ENCODE measurements at regions of chr16 and their contacts with region 1.

Region 1: GRCh38 chr16:10226141-10226986 is 44.1 kb upstream of the GRIN2A start:
- DNase-seq: no peak
- ATAC-seq: no peak
- H3K4me3 ChIP-seq: no peak overlapping the region
- H3K27ac ChIP-seq: no peak overlapping the region
- H3K4me1 ChIP-seq: no peaks in the 10 kb centered on the region
- H3K27me3 ChIP-seq: no peaks in the 10 kb centered on the region
- CTCF ChIP-seq: no peak
- POLR2A ChIP-seq: no peak
- RAD21 ChIP-seq: no peak

Region 2: GRCh38 chr16:10200637-10201586 is 25.5 kb before region 1 on chr16:
- CTCF ChIA-PET with region 1: no interaction called
- POLR2A ChIA-PET with region 1: no interaction called
- dilution Hi-C with region 1: no loop called
- in situ Hi-C with region 1: no loop called
- intact Hi-C with region 1: no loop called
- DNase-seq: no peak
- ATAC-seq: no peak
- H3K4me3 ChIP-seq: no peak overlapping the region
- H3K27ac ChIP-seq: no peak overlapping the region
- H3K4me1 ChIP-seq: no peaks in the 10 kb centered on the region
- H3K27me3 ChIP-seq: no peaks in the 10 kb centered on the region
- CTCF ChIP-seq: no peak
- POLR2A ChIP-seq: no peak
- RAD21 ChIP-seq: no peak

Region 3: DNA sequence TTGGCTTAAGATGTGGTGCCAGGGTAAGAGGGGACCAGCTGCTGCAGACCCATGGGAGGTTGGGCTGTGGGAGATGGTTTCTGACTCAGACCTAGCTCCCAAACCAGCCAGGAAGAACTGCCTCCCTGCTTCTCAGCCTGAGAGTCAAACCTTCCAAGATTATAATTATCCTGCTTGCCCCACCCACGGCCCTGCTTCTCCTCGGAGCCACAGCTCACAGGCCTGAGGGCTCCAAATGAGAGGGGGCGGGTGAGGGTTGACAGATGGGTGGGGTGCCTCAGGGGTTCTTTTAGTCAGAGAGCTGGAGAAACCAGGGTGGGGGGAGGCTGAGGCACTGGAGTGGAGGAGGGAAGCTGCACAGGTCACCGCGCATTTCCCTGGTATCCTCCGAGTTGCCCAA is 15.4 kb before region 1 on chr16:
- CTCF ChIA-PET with region 1: no interaction called
- POLR2A ChIA-PET with region 1: interaction called, 10 read pairs
- dilution Hi-C with region 1: no loop called
- in situ Hi-C with region 1: no loop called
- intact Hi-C with region 1: no loop called
- DNase-seq: no peak
- ATAC-seq: no peak
- H3K4me3 ChIP-seq: no peak overlapping the region
- H3K27ac ChIP-seq: no peak overlapping the region
- H3K4me1 ChIP-seq: no peaks in the 10 kb centered on the region
- H3K27me3 ChIP-seq: no peaks in the 10 kb centered on the region
- CTCF ChIP-seq: no peak
- POLR2A ChIP-seq: no peak
- RAD21 ChIP-seq: no peak

Region 4: GRCh38 chr16:10625593-10626273 is 399.4 kb after region 1 on chr16:
- CTCF ChIA-PET with region 1: no interaction called
- POLR2A ChIA-PET with region 1: no interaction called
- dilution Hi-C with region 1: no loop called
- in situ Hi-C with region 1: no loop called
- intact Hi-C with region 1: no loop called
- DNase-seq: peak; percentile 31
- ATAC-seq: peak; percentile 32; the same call in 1 of the 2 replicates
- H3K4me3 ChIP-seq: no peak overlapping the region
- H3K27ac ChIP-seq: no peak overlapping the region
- H3K4me1 ChIP-seq: no peaks in the 10 kb centered on the region
- H3K27me3 ChIP-seq: peaks cover 8% of the 10 kb centered on the region
- CTCF ChIP-seq: no peak
- POLR2A ChIP-seq: no peak
- RAD21 ChIP-seq: no peak

Region 5: DNA sequence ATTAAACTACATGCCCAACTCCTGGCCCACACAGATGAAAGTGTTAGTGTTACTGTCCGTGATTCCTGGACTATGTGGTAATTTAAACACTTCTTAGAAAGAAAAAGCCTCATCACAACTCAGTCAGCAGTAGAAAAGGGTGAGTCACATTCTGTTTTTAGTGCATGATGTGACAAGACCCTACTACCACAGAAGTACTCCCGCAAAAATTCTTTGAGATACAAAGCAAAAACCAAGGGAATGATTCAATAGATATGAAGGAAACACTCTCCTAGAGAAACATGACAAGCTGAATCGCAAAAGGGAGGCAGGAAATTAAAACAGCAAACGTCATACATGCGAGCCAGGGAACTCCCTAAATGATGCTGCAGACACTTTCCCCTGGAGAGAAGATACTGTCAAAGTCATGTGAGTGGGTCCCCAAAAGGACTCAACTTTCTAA is 1456.3 kb after region 1 on chr16:
- CTCF ChIA-PET with region 1: no interaction called
- POLR2A ChIA-PET with region 1: no interaction called
- dilution Hi-C with region 1: no loop called
- in situ Hi-C with region 1: no loop called
- intact Hi-C with region 1: no loop called
- DNase-seq: peak; percentile 99
- ATAC-seq: peak; percentile 75
- H3K4me3 ChIP-seq: no peak overlapping the region
- H3K27ac ChIP-seq: no peak overlapping the region
- H3K4me1 ChIP-seq: peaks cover 25% of the 10 kb centered on the region
- H3K27me3 ChIP-seq: no peaks in the 10 kb centered on the region
- CTCF ChIP-seq: no peak
- POLR2A ChIP-seq: no peak
- RAD21 ChIP-seq: no peak